ENCODE measurements at regions of chr1 and their contacts with region 1.

Region 1: GRCh38 chr1:53959664-53960250 is 13.6 kb downstream of the LRRC42 start:
- DNase-seq: no peak
- ATAC-seq: no peak
- H3K4me3 Mint-ChIP-seq: no peak overlapping the region
- H3K27ac Mint-ChIP-seq: no peak overlapping the region
- H3K4me1 Mint-ChIP-seq: peaks cover 11% of the 10 kb centered on the region
- H3K27me3 Mint-ChIP-seq: no peaks in the 10 kb centered on the region

Region 2: GRCh38 chr1:53869454-53870117 is 90.2 kb before region 1 on chr1:
- CTCF ChIA-PET with region 1: interaction called, 17 read pairs
- POLR2A ChIA-PET with region 1: no interaction called
- intact Hi-C with region 1: no loop called
- DNase-seq: no peak
- ATAC-seq: no peak
- H3K4me3 Mint-ChIP-seq: no peak overlapping the region
- H3K27ac Mint-ChIP-seq: no peak overlapping the region
- H3K4me1 Mint-ChIP-seq: no peaks in the 10 kb centered on the region
- H3K27me3 Mint-ChIP-seq: no peaks in the 10 kb centered on the region

Region 3: DNA sequence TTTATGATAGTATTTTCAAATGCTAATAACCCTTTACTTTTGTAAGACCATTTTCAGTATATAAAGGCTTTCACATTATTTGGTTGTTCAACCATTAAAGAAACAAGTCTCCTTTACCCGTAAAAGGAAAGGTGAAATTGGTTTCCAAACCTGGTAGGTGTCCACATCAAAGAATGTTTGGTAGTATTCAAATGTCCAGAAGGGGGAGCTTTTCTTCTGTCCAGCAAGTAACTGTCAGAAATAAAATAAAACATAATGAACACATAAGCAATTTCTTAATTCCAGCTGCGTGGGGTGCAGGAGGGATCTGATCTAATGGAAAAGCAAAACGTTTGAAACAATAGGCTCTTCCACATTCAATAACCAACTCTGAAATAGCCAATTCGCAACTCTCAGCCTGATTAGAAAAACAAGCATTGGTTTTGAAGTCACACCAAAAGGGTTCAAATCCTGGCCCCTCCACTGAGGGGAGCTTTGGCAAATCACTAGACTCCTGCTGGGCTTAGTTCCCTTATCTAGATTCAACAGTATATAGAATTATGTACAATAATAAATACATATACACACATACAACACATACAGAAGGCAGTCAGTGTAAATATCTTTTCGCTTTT is 81.2 kb before region 1 on chr1:
- CTCF ChIA-PET with region 1: interaction called, 35 read pairs
- POLR2A ChIA-PET with region 1: no interaction called
- intact Hi-C with region 1: loop called (anchors 1 kb)
- DNase-seq: no peak
- ATAC-seq: peak; percentile 36
- H3K4me3 Mint-ChIP-seq: no peak overlapping the region
- H3K27ac Mint-ChIP-seq: no peak overlapping the region
- H3K4me1 Mint-ChIP-seq: peaks cover 4% of the 10 kb centered on the region
- H3K27me3 Mint-ChIP-seq: no peaks in the 10 kb centered on the region

Region 4: GRCh38 chr1:53889304-53890298 is 70.2 kb before region 1 on chr1 and contains the start of gene YIPF1:
- CTCF ChIA-PET with region 1: interaction called, 13 read pairs
- POLR2A ChIA-PET with region 1: no interaction called
- intact Hi-C with region 1: no loop called
- DNase-seq: peak; percentile 93
- ATAC-seq: peak; percentile 90
- H3K4me3 Mint-ChIP-seq: peak within 1 kb of the TSS; percentile 96
- H3K27ac Mint-ChIP-seq: peak within 1 kb of the TSS; percentile 94
- H3K4me1 Mint-ChIP-seq: peaks cover 38% of the 10 kb centered on the region
- H3K27me3 Mint-ChIP-seq: no peaks in the 10 kb centered on the region
- total RNA-seq, gene YIPF1: 19.0 to 24.4 TPM

Region 5: GRCh38 chr1:53919675-53920066 is 40.1 kb before region 1 on chr1:
- CTCF ChIA-PET with region 1: interaction called, 10 read pairs
- POLR2A ChIA-PET with region 1: no interaction called
- intact Hi-C with region 1: no loop called
- DNase-seq: peak; percentile 59
- ATAC-seq: peak; percentile 90
- H3K4me3 Mint-ChIP-seq: no peak overlapping the region
- H3K27ac Mint-ChIP-seq: peak overlapping the region; percentile 85
- H3K4me1 Mint-ChIP-seq: peaks cover 28% of the 10 kb centered on the region
- H3K27me3 Mint-ChIP-seq: no peaks in the 10 kb centered on the region

Region 6: DNA sequence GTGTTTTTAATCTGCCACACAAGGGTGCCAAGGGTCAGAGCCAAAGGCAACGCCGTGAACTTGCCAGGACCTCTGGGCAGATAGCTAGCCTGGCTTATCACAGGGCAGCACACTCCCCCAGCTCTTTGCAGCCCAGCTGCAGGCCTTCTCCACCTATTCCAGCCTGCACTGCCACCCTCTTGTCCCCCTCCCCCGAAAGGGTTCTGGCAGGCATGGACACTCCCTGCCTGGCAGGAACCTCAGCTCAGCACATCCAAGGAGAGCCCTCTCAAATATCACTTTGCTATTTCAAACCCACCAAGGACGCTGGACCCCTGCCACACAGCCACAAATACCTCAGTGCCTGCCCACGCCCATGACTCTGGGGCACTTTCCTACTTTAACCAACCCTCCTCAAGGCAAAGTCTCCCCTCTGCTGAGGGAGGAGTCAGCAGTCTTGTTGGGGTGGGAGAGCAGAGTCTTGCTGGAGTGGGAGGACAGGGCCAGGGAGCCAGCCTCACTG is 437.4 kb after region 1 on chr1:
- CTCF ChIA-PET with region 1: no interaction called
- POLR2A ChIA-PET with region 1: no interaction called
- intact Hi-C with region 1: no loop called
- DNase-seq: no peak
- ATAC-seq: no peak
- H3K4me3 Mint-ChIP-seq: no peak overlapping the region
- H3K27ac Mint-ChIP-seq: no peak overlapping the region
- H3K4me1 Mint-ChIP-seq: peaks cover 47% of the 10 kb centered on the region
- H3K27me3 Mint-ChIP-seq: no peaks in the 10 kb centered on the region

Measured in activated CD4-positive, alpha-beta T cell treated with anti-CD3 and anti-CD28 coated beads for 36 hours (primary cell).